Motor neuron (in vitro differentiated cells): ENCODE measurements at regions of chr19 and their contacts with region 1.

Region 1: DNA sequence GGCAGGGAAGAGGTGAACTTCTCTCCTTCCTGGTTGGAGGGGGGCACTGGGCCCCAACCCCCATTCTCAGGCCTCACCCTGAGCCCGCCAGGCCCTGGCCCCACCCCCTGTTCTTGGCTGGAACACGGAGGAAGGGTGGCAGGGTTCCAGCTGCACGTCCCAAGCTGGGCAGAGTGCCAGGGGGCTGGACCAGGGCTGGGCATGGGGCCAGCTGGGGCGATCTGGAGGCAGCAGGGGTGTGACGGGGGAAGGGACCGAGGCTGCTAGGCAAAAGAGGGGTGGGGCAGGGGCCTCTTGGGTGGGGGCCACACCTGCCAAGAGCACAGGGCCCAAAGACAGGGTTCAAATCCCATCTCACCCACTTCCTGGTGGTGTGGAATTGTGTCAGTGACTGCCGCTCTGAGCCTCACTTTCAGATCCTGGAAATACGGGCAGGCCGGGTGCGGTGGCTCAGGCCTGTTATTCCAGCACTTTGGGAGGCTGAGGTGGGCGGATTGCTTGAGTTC is 2.2 kb downstream of the HIF3A start:
- ATAC-seq: peak; percentile 7 to 53 (median 30)
- H3K4me3 ChIP-seq: no peak overlapping the region
- H3K27ac ChIP-seq: no peak overlapping the region
- H3K4me1 ChIP-seq: peaks cover 23 to 50% of the 10 kb centered on the region in 2 donors

Region 2: DNA sequence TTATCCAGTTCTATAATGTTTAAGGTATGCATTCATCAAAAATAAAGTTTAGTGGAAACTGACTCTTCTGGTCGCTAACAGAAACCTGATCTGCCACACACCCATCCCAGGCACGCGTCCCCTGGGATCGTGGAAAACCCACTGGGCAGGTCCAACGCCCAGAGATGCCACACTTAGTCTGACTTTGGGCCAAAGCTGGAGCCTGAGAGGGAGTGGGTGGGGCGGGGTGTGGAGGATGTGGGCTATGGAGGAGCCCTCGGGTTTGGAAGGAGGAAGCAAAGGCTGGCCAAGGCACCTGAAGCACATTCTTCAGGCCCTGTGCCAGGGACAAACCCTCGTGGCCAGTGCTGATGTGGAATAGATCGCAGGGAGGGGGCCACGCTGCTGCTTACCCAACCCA is 67.0 kb before region 1 on chr19:
- in situ Hi-C with region 1: no loop called
- ATAC-seq: no peak
- H3K4me3 ChIP-seq: no peak overlapping the region
- H3K27ac ChIP-seq: no peak overlapping the region
- H3K4me1 ChIP-seq: no peaks in the 10 kb centered on the region

Region 3: GRCh38 chr19:46487802-46488445 is 188.9 kb after region 1 on chr19:
- in situ Hi-C with region 1: loop called in 2 of 9 experiments (anchors 25 kb)
- ATAC-seq: peak; percentile 66 to 89 (median 74)
- H3K4me3 ChIP-seq: peak overlapping the region; percentile 10 to 33 (median 25)
- H3K27ac ChIP-seq: peak overlapping the region in 1 of 2 donors; percentile 8
- H3K4me1 ChIP-seq: peaks cover 26 to 45% of the 10 kb centered on the region in 2 donors

Region 4: GRCh38 chr19:46513461-46514236 is 214.6 kb after region 1 on chr19:
- in situ Hi-C with region 1: loop called in 2 of 9 experiments (anchors 25 kb)
- ATAC-seq: peak; percentile 80 to 97 (median 90)
- H3K4me3 ChIP-seq: no peak overlapping the region
- H3K27ac ChIP-seq: no peak overlapping the region
- H3K4me1 ChIP-seq: peaks cover 0 to 2% of the 10 kb centered on the region in 2 donors

Region 5: DNA sequence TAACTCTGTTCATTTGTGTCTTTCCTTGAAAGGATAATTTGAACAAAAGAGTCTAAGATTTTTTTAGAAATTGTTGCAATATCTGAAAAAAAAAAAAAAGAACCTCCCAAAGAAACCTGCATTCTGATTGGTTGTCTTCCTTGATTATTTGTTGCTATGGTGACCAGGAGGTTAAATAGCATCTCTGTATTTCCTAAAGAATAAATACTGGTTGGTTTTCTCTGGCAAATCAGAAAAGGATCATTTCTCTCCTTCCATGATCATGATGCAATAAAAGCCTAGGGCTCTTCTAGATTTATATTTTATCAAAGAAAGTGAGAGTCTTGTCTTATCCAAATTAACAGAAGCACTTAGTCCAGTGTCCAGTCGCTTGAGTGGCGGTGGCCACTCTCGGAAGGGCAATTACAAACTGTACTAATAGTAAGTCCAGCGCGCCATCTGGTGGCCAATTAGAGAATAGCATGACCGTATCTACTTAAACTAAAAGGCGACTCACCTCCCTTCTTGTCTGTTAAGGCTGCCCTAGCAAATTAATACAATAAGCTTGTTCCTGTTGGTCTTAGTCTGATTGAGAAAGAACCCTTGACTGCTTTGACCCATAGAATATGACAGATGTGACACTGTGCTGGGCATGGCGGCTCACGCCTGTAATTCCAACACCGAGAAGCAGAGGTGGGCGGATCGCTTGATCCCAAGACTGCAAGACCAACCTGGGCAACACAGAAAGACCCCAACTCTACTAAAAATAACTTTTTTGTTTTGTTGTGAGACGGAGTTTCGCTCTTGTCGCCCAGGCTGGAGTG is 243.6 kb after region 1 on chr19:
- in situ Hi-C with region 1: loop called in 1 of 9 experiments (anchors 25 kb)
- ATAC-seq: peak; percentile 86 to 92 (median 89)
- H3K4me3 ChIP-seq: no peak overlapping the region
- H3K27ac ChIP-seq: no peak overlapping the region
- H3K4me1 ChIP-seq: peaks cover 0 to 2% of the 10 kb centered on the region in 2 donors